Activated T-helper 2 cell treated with anti-CD3 and anti-CD28 coated beads, Interferon-gamma antibody, Interleukin-2, Interleukin-4, amounts not matched to agents 10 μg/mL and 5 μg/mL and 100 μg/mL, durations not matched to agents 14 hours and 24 hours and 36 hours (primary cell): ENCODE measurements at regions of chr13 and their contacts with region 1.

Region 1: DNA sequence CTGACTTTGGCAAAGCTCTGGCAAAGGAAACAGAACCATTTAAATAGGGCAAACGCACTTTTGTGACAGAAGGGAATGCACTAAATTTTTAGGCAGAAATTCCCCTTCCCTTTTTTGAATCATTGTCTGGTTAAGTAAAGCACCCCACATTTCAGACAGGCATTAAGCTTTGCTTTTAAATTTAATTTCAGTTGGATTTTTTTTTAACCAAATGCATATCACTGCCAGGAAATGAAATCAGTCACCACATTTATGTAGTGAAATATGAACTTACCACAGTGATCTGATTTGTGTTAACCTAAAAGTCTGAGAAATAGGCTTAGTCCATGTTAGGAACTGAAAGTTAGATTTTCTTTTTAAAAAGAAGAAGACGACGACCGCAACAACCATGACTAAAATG is 10.8 kb downstream of the GPR183 start:
- DNase-seq: no peak
- H3K4me3 Mint-ChIP-seq: peak overlapping the region; percentile 73
- H3K27ac Mint-ChIP-seq: peak overlapping the region; percentile 87
- H3K4me1 Mint-ChIP-seq: peaks cover 74% of the 10 kb centered on the region
- H3K27me3 Mint-ChIP-seq: no peaks in the 10 kb centered on the region

Region 2: DNA sequence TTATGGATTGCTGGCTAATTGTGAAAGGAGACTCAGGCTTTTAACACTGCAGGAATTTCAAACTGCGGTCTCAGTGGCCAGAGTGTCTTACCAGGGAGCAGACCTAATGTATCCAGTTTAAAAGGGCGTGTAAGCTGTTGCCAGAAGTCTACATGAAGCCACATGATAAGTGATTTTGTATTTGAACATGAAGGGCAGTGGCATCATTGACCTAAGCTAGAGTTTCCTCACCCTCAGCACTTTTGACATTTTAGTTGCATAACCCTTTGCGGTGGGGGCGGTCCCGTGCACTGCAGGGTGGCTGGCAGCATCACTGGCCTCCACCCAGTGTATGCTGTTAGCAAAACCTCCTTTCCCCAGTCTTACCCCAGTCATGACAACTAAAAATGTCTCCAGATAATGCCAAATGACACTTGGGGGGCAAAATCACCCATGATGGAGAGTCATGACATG is 14.6 kb before region 1 on chr13:
- intact Hi-C with region 1: loop called (anchors 2 kb)
- DNase-seq: peak; percentile 37
- H3K4me3 Mint-ChIP-seq: no peak overlapping the region
- H3K27ac Mint-ChIP-seq: peak overlapping the region; percentile 47
- H3K4me1 Mint-ChIP-seq: peaks cover 80% of the 10 kb centered on the region
- H3K27me3 Mint-ChIP-seq: no peaks in the 10 kb centered on the region

Region 3: GRCh38 chr13:99322297-99323103 is 26.1 kb after region 1 on chr13:
- intact Hi-C with region 1: loop called (anchors 1 kb)
- DNase-seq: peak; percentile 44
- H3K4me3 Mint-ChIP-seq: peak overlapping the region; percentile 31
- H3K27ac Mint-ChIP-seq: peak overlapping the region; percentile 96
- H3K4me1 Mint-ChIP-seq: peaks cover 60% of the 10 kb centered on the region
- H3K27me3 Mint-ChIP-seq: no peaks in the 10 kb centered on the region